ENCODE measurements at regions of chr11 and their contacts with region 1.

Region 1: DNA sequence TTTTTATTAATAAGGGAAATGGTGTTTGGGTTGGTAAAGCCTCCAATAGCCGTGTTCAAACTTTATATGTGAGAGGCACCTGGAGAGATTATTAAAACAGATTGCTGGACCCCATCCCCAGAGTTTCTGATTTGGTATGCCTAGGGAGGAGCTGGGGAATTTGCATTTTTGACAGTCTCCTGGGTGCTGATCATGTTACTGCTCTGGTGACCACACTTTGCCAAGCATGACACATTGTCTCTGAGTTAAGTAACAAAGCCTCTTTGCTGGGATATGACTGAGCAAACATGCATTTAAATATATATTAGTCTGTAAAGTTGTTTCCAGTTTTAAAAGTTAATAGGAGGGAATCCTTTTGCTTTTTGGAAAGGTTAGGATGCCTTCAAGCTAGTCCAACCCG is 140.4 kb downstream of the NAV2 start:
- DNase-seq: no peak
- ATAC-seq: peak; percentile 57; the same call in 2 of the 3 replicates
- H3K4me3 ChIP-seq: no peak overlapping the region
- H3K27ac ChIP-seq: no peak overlapping the region
- H3K4me1 ChIP-seq: no peaks in the 10 kb centered on the region; the same call in 1 of the 2 replicates
- H3K27me3 ChIP-seq: no peaks in the 10 kb centered on the region
- CTCF ChIP-seq: no peak
- EP300 ChIP-seq: no peak
- POLR2A ChIP-seq: no peak
- RAD21 ChIP-seq: no peak

Region 2: DNA sequence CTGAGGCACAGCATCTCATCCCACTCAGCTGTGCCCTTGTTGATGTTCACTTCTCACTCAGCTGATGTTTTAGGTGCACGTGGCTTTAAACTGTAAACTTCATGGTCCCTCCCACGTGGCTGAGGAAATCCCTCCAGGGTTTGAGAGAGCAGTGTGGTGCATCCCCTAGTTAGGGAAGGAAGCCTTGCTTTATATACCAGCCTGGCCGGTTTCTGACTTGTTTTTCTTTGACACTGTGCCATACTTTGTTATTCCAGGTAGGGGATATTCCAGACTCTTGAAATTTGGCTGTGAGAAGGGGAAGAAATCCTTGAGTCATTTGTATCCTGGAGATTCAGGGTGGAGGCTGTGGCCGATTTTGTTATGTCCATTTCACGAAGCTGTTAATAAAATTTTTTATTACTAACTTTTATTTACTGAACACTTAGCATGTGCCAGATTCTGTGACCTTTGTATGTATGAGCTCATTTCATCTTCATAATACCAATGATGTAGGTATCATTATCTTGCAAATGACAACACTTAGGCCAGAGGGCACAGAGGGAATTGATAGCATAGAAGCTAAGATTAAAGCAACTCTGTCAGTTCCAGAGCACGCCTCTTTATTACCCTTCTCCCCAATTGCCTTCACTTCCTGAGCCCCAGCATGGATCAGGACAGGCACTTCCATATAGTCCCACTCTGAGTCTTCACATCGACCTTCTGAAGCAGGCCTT is 23.7 kb before region 1 on chr11:
- CTCF ChIA-PET with region 1: interaction called, 3 read pairs
- POLR2A ChIA-PET with region 1: interaction called, 3 read pairs
- RAD21 ChIA-PET with region 1: no interaction called
- SMC1A ChIA-PET with region 1: interaction called, 10 read pairs
- in situ Hi-C with region 1: no loop called
- intact Hi-C with region 1: no loop called
- DNase-seq: no peak
- ATAC-seq: peak; percentile 75
- H3K4me3 ChIP-seq: no peak overlapping the region
- H3K27ac ChIP-seq: no peak overlapping the region
- H3K4me1 ChIP-seq: peaks cover 7% of the 10 kb centered on the region; the same call in 1 of the 2 replicates
- H3K27me3 ChIP-seq: no peaks in the 10 kb centered on the region
- CTCF ChIP-seq: no peak
- EP300 ChIP-seq: no peak
- POLR2A ChIP-seq: no peak
- RAD21 ChIP-seq: no peak

Measured in GM12878 (cell line).